T-cell (primary cell): ENCODE measurements at regions of chr22 and their contacts with region 1.

Region 1: GRCh38 chr22:39532215-39533071 is at the start of gene RPS19BP1:
- DNase-seq: peak; percentile 97 to 100 (median 99)
- ATAC-seq: peak; percentile 84 to 87 (median 86)
- H3K4me3 ChIP-seq: peak within 1 kb of the TSS; percentile 89 to 92
- H3K4me3 Mint-ChIP-seq: peak within 1 kb of the TSS; percentile 92 to 97 (median 95)
- H3K27ac ChIP-seq: peak within 1 kb of the TSS; percentile 76
- H3K27ac Mint-ChIP-seq: peak within 1 kb of the TSS; percentile 94 to 97
- H3K4me1 ChIP-seq: peaks cover 27 to 65% of the 10 kb centered on the region in 2 experiments
- H3K4me1 Mint-ChIP-seq: peaks cover 52 to 58% (median 53%) of the 10 kb centered on the region in 3 donors
- H3K27me3 ChIP-seq: peaks cover 0 to 2% of the 10 kb centered on the region in 2 experiments
- H3K27me3 Mint-ChIP-seq: no peaks in the 10 kb centered on the region
- total RNA-seq, gene RPS19BP1: 42.4 to 76.8 (median 73.5) TPM

Region 2: GRCh38 chr22:39395936-39396796 is 136.3 kb before region 1 on chr22:
- CTCF ChIA-PET with region 1: interaction called in 1 of 2 experiments, 11 read pairs
- POLR2A ChIA-PET with region 1: no interaction called
- DNase-seq: no peak
- ATAC-seq: no peak
- H3K4me3 ChIP-seq: no peak overlapping the region
- H3K4me3 Mint-ChIP-seq: no peak overlapping the region
- H3K27ac ChIP-seq: no peak overlapping the region
- H3K27ac Mint-ChIP-seq: no peak overlapping the region
- H3K4me1 ChIP-seq: peaks cover 6 to 21% of the 10 kb centered on the region in 2 experiments
- H3K4me1 Mint-ChIP-seq: peaks cover 10 to 12% (median 11%) of the 10 kb centered on the region in 3 donors
- H3K27me3 ChIP-seq: no peaks in the 10 kb centered on the region
- H3K27me3 Mint-ChIP-seq: no peaks in the 10 kb centered on the region

Region 3: GRCh38 chr22:39414886-39415285 is 117.6 kb before region 1 on chr22:
- CTCF ChIA-PET with region 1: no interaction called
- POLR2A ChIA-PET with region 1: no interaction called
- DNase-seq: no peak
- ATAC-seq: no peak
- H3K4me3 ChIP-seq: peak overlapping the region in 1 of 2 donors; percentile 53
- H3K4me3 Mint-ChIP-seq: peak overlapping the region in 1 of 3 donors; percentile 74
- H3K27ac ChIP-seq: no peak overlapping the region
- H3K27ac Mint-ChIP-seq: peak overlapping the region in 1 of 2 donors; percentile 85
- H3K4me1 ChIP-seq: peaks cover 47 to 57% of the 10 kb centered on the region in 2 experiments
- H3K4me1 Mint-ChIP-seq: peaks cover 59 to 63% (median 60%) of the 10 kb centered on the region in 3 donors
- H3K27me3 ChIP-seq: no peaks in the 10 kb centered on the region
- H3K27me3 Mint-ChIP-seq: no peaks in the 10 kb centered on the region

Region 4: DNA sequence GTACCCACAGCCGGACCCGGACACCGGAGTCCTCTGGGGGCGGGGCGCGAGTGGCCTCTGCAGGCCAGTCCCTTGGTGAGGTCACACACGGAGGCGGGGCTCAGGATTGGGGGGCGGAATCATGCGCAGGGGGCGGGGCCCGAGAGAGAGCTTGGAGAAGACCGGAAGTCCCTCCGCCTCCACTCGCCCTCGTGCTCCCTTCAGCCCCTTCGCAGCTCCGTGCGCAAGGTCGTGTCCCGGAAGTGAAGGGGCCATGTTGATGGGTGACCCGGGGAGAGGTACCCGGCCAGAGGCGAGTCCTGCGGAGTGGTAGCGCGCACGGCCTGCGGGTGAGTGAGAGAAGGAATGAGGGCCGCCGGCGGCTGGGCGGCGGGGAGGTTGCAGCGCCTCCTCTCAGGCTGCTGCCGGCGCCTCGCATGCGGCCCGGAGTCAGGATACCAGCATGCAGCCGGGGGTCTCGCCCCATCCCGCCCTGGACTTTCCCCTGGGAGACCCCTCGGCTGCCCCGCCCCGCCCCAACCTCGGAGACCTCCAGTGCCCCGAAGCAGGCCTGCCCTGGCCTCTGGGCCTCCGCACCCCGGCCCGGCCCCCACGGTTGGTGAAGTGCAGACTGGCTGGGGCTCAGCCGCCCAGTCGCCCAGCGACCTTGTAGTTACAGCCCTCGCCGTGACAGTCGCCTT is 30.2 kb before region 1 on chr22 and contains the start of gene MIEF1:
- CTCF ChIA-PET with region 1: interaction called, 5 to 27 read pairs
- POLR2A ChIA-PET with region 1: no interaction called
- DNase-seq: peak; percentile 71 to 93 (median 82)
- ATAC-seq: peak; percentile 93 to 97 (median 96)
- H3K4me3 ChIP-seq: peak within 1 kb of the TSS; percentile 72 to 77
- H3K4me3 Mint-ChIP-seq: peak within 1 kb of the TSS; percentile 95 to 99 (median 95)
- H3K27ac ChIP-seq: peak within 1 kb of the TSS; percentile 63
- H3K27ac Mint-ChIP-seq: peak within 1 kb of the TSS; percentile 95 to 98
- H3K4me1 ChIP-seq: peaks cover 10 to 43% of the 10 kb centered on the region in 2 experiments
- H3K4me1 Mint-ChIP-seq: peaks cover 44 to 47% (median 45%) of the 10 kb centered on the region in 3 donors
- H3K27me3 ChIP-seq: peaks cover 0 to 2% of the 10 kb centered on the region in 2 experiments
- H3K27me3 Mint-ChIP-seq: no peaks in the 10 kb centered on the region
- total RNA-seq, gene MIEF1: 19.7 to 44.1 (median 38.5) TPM

Region 5: GRCh38 chr22:39543095-39543494 is 10.7 kb after region 1 on chr22:
- CTCF ChIA-PET with region 1: interaction called in 1 of 2 experiments, 5 read pairs
- POLR2A ChIA-PET with region 1: interaction called in 1 of 2 experiments, 11 read pairs
- DNase-seq: peak in 3 of 35 experiments; percentile 20 to 48 (median 29)
- ATAC-seq: peak in 1 of 4 experiments; percentile 51
- H3K4me3 ChIP-seq: no peak overlapping the region
- H3K4me3 Mint-ChIP-seq: no peak overlapping the region
- H3K27ac ChIP-seq: no peak overlapping the region
- H3K27ac Mint-ChIP-seq: no peak overlapping the region
- H3K4me1 ChIP-seq: peaks cover 0 to 26% of the 10 kb centered on the region in 2 experiments
- H3K4me1 Mint-ChIP-seq: peaks cover 17 to 21% (median 20%) of the 10 kb centered on the region in 3 donors
- H3K27me3 ChIP-seq: peaks cover 0 to 42% of the 10 kb centered on the region in 2 experiments
- H3K27me3 Mint-ChIP-seq: peaks cover 20 to 34% of the 10 kb centered on the region in 2 donors

Region 6: DNA sequence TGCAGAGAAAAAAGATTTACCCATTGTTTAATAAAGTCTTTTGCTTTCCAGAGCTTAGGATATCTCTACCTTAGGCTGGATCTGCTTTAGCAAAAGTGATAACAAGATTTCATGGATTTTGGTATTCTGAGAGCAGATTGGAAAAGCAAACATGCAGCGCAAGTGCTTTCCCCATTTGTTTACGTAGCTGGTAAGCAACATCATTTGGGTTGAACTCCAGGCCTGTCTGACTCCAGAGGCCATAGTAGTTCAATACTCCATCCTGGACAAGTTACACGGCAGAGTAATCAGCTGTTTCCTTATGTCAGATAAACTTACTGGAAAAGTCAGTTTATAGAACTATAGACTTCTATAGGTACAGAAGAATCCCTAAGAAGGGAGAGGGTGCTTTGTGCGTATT is 604.7 kb after region 1 on chr22:
- CTCF ChIA-PET with region 1: no interaction called
- POLR2A ChIA-PET with region 1: interaction called in 1 of 2 experiments, 10 read pairs
- DNase-seq: no peak
- ATAC-seq: no peak
- H3K4me3 ChIP-seq: no peak overlapping the region
- H3K4me3 Mint-ChIP-seq: no peak overlapping the region
- H3K27ac ChIP-seq: no peak overlapping the region
- H3K27ac Mint-ChIP-seq: peak overlapping the region in 1 of 2 donors; percentile 3
- H3K4me1 ChIP-seq: no peaks in the 10 kb centered on the region
- H3K4me1 Mint-ChIP-seq: peaks cover 11 to 31% (median 22%) of the 10 kb centered on the region in 3 donors
- H3K27me3 ChIP-seq: no peaks in the 10 kb centered on the region
- H3K27me3 Mint-ChIP-seq: no peaks in the 10 kb centered on the region